GM12878 (cell line): ENCODE measurements at regions of chr1 and their contacts with region 1.

Region 1: DNA sequence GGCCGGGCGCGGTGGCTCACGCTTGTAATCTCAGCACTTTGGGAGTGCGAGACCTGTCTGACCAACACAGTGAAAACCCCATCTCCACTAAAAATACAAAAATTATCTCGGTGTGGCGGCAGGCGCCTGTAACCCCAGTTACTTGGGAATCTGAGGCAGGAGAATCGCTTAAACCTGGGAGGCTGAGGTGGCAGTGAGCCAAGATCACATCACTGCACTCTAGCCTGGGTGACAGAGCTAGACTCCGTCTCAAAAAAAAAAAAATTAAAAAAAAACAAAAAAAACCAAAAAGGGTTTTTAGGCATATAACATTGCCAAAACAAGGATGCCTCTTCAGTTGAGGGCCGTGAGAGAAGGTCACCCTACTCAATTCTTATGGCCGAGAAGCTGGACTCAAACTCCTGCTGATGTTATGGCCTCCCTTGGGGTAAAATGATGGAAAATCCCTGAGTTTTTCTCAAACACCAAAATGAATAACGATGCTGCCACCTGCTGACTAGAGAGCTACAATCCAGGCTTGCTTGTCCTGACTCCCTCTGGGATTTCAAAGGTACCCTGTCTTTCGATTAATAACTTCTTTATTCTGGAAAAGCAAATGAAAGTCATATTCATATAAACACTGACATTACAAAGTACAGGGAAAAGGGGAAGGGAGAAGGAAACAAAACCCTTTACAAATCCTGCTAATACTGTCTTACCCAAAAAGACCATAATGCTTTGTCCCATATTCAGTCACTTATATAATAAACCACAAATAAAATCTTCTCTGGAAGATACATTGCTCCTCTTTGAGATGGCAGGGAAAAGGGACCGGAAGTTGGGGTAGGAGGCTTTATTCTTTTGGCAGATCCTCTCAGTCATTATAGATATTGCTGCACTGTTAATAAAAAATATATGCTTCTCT is 10.7 kb downstream of the RAB42 start:
- DNase-seq: no peak
- ATAC-seq: peak; percentile 57
- H3K4me3 ChIP-seq: no peak overlapping the region
- H3K27ac ChIP-seq: no peak overlapping the region
- H3K4me1 ChIP-seq: peaks cover 22% of the 10 kb centered on the region
- H3K27me3 ChIP-seq: no peaks in the 10 kb centered on the region
- CTCF ChIP-seq: peak; percentile 56 to 85 (median 59); a peak in 5 of 6 replicates
- EP300 ChIP-seq: no peak
- POLR2A ChIP-seq: no peak
- RAD21 ChIP-seq: peak; percentile 84

Region 2: DNA sequence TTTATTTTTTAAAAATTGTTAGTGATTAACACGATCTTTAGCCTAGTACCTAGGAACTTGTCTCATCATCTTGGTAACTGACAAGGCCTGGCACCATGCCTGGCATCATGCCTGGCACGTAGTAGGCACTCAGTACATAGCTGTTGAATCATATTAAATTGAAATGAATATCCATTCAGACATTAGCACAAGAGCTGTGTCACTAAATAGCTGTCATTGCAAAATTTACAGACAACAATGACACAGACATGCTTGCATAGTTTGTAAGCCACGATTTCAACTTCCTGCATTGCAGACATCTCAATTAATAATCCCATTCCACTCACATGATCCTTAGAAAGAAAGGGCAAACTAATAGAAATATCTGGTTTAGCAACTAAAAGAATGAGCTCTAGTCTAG is 248.7 kb before region 1 on chr1:
- CTCF ChIA-PET with region 1: interaction called, 104 read pairs
- POLR2A ChIA-PET with region 1: no interaction called
- RAD21 ChIA-PET with region 1: interaction called, 26 read pairs
- SMC1A ChIA-PET with region 1: interaction called, 48 read pairs
- in situ Hi-C with region 1: no loop called
- intact Hi-C with region 1: loop called (anchors 2 kb)
- DNase-seq: no peak
- ATAC-seq: no peak
- H3K4me3 ChIP-seq: no peak overlapping the region
- H3K27ac ChIP-seq: no peak overlapping the region
- H3K4me1 ChIP-seq: no peaks in the 10 kb centered on the region
- H3K27me3 ChIP-seq: no peaks in the 10 kb centered on the region
- CTCF ChIP-seq: no peak
- EP300 ChIP-seq: no peak
- POLR2A ChIP-seq: no peak
- RAD21 ChIP-seq: no peak

Region 3: GRCh38 chr1:28409090-28409489 is 193.7 kb before region 1 on chr1:
- CTCF ChIA-PET with region 1: interaction called, 102 read pairs
- POLR2A ChIA-PET with region 1: interaction called, 3 read pairs
- RAD21 ChIA-PET with region 1: interaction called, 34 read pairs
- SMC1A ChIA-PET with region 1: interaction called, 66 read pairs
- in situ Hi-C with region 1: loop called (anchors 5 kb)
- intact Hi-C with region 1: loop called (anchors 2 kb)
- DNase-seq: no peak
- ATAC-seq: no peak
- H3K4me3 ChIP-seq: no peak overlapping the region
- H3K27ac ChIP-seq: no peak overlapping the region
- H3K4me1 ChIP-seq: no peaks in the 10 kb centered on the region
- H3K27me3 ChIP-seq: no peaks in the 10 kb centered on the region
- CTCF ChIP-seq: no peak
- EP300 ChIP-seq: no peak
- POLR2A ChIP-seq: no peak
- RAD21 ChIP-seq: no peak

Region 4: DNA sequence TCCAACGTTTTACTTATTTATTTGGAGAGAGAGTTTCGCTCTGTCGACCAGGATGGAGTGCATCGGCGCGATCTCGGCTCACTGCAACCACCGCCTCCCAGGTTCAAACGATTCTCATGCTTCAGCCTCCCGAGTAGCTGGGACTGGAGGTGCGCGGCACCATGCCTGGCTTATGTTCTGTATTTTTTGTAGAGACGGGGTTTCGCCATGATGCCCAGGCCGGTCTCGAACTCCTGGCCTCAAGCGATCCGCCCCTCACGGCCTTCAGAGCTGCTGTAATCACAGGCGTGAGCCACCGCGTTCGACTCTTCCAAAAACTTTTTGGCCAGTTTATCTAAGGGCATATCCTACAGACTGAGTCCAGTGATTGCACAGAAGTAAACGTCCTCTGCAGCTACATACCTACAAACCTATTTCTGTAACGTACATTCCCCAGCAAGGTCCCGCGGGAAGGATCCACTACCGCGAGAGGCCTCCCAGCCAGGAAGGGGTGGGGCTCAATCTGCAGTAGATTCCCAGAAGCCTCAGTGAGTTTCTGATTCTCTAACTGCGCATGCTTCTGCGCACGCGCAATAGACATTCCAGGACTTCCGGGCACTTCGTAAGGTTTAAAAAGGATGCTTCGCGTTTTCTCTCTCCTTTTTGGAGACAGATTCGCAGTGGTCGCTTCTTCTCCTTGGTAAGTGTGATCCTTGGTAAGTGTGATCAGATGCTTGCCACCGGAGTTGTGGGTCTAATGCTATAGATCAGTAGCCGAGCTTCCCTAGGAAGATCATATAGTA is 97.2 kb before region 1 on chr1 and contains the start of gene RCC1:
- CTCF ChIA-PET with region 1: interaction called, 58 read pairs
- POLR2A ChIA-PET with region 1: no interaction called
- RAD21 ChIA-PET with region 1: interaction called, 16 read pairs
- SMC1A ChIA-PET with region 1: interaction called, 4 read pairs
- in situ Hi-C with region 1: no loop called
- intact Hi-C with region 1: no loop called
- DNase-seq: peak; percentile 98
- ATAC-seq: peak; percentile 80
- H3K4me3 ChIP-seq: peak within 1 kb of the TSS; percentile 84
- H3K27ac ChIP-seq: peak within 1 kb of the TSS; percentile 94
- H3K4me1 ChIP-seq: peaks cover 10% of the 10 kb centered on the region
- H3K27me3 ChIP-seq: no peaks in the 10 kb centered on the region
- CTCF ChIP-seq: no peak
- EP300 ChIP-seq: no peak
- POLR2A ChIP-seq: peak; percentile 89
- RAD21 ChIP-seq: no peak
- polyA plus RNA-seq, gene RCC1: 8.3 to 15.2 TPM

Region 5: DNA sequence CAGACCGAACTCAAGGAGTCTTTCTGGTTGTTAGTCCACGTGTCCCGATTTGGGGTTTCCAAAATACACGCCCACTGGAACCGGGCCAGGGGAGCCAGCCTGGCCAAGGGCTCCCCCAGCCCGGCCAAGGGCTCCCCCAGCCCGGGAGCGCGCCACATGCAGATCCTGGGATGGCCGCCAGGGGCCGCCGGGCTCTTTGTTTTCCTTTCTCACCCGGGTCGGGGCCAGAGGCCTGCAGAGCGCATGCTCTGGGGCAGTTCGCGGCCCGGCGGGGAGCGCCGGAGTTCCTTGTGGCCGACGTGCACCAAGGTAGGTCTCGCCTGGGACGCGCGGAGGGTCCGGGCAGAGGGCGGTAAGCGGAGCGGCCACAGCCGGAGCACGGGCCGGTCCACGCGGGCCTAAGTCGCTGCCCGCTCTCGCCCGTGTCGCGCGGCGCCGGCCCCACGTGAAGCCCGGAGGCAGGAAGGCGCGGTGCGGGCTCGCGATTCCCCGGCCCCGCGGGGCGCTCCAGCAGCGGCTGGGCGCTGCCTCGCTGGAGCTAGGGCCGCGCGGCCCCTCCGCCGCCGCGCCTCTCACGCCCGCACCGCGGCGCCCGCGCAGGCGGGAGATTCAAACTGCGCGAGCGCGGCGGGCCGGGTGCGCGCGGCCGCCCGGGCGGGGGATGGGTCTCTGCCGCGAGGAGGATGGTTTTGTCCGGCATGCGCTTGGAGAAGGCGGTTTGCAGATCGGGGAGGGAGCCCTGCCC is 84.6 kb before region 1 on chr1:
- CTCF ChIA-PET with region 1: interaction called, 95 read pairs
- POLR2A ChIA-PET with region 1: interaction called, 21 read pairs
- RAD21 ChIA-PET with region 1: interaction called, 32 read pairs
- SMC1A ChIA-PET with region 1: interaction called, 57 read pairs
- in situ Hi-C with region 1: loop called (anchors 5 kb)
- intact Hi-C with region 1: loop called (anchors 1 kb)
- DNase-seq: no peak
- ATAC-seq: peak; percentile 72
- H3K4me3 ChIP-seq: peak overlapping the region; percentile 80
- H3K27ac ChIP-seq: peak overlapping the region; percentile 84
- H3K4me1 ChIP-seq: peaks cover 18% of the 10 kb centered on the region
- H3K27me3 ChIP-seq: no peaks in the 10 kb centered on the region
- CTCF ChIP-seq: peak; percentile 94 to 99 (median 97); a peak in 5 of 6 replicates
- EP300 ChIP-seq: no peak
- POLR2A ChIP-seq: peak; percentile 89
- RAD21 ChIP-seq: peak; percentile 89

Region 6: GRCh38 chr1:28581536-28582247 is 21.1 kb before region 1 on chr1:
- CTCF ChIA-PET with region 1: interaction called, 46 read pairs
- POLR2A ChIA-PET with region 1: interaction called, 33 read pairs
- RAD21 ChIA-PET with region 1: interaction called, 108 read pairs
- SMC1A ChIA-PET with region 1: interaction called, 83 read pairs
- in situ Hi-C with region 1: no loop called
- intact Hi-C with region 1: no loop called
- DNase-seq: peak; percentile 78
- ATAC-seq: peak; percentile 91
- H3K4me3 ChIP-seq: peak overlapping the region; percentile 99
- H3K27ac ChIP-seq: peak overlapping the region; percentile 55
- H3K4me1 ChIP-seq: peaks cover 14% of the 10 kb centered on the region
- H3K27me3 ChIP-seq: no peaks in the 10 kb centered on the region
- CTCF ChIP-seq: peak in 1 of 3 experiments; percentile 7; a peak in 1 of 6 replicates
- EP300 ChIP-seq: 0 out of 4 replicates have a peak, but pooled peaks of 1 of the 2 experiments have one; percentile 22
- POLR2A ChIP-seq: peak; percentile 100
- RAD21 ChIP-seq: no peak

Region 7: DNA sequence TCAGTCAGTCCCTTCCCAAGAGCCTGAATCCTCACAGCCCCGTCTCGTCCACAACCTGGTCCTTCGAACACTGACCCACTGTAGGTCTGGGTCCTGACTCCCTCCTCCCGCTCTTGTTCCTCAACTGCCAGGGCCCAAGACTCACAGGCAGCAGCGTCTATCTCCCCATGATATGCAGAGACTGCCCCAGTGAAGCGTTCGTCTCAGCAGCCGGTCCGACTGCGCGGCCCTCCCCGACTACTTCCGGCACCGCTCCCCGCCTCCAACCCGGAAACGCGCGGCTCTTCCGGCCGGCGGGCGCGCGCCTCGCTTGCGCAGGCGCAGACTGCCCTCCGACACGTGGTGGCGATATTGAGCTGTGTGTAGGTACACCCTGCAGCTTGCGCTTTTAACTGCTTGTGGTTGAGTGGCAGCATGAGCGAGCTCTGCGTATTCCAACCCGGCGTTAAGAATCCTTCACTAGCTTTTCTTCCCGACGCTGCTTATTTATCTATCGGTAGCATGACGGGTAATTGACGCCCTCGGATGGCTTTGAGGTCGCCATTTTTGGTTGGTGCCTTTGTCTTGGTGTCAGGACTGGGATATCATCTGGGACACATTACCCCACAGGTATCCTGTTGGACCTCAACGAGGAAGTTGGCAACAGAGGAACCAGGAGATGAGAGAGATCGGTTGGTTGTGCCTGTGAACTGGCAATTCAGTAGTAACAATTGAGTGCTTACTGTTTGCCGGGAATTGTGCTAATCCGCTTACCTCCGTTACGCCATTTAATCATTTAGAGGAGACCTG is 40.3 kb after region 1 on chr1 and contains the start of gene TAF12:
- CTCF ChIA-PET with region 1: interaction called, 8 read pairs
- POLR2A ChIA-PET with region 1: interaction called, 4 read pairs
- RAD21 ChIA-PET with region 1: interaction called, 10 read pairs
- SMC1A ChIA-PET with region 1: no interaction called
- in situ Hi-C with region 1: no loop called
- intact Hi-C with region 1: no loop called
- DNase-seq: peak; percentile 93
- ATAC-seq: peak; percentile 90
- H3K4me3 ChIP-seq: peak within 1 kb of the TSS; percentile 92
- H3K27ac ChIP-seq: peak within 1 kb of the TSS; percentile 90
- H3K4me1 ChIP-seq: peaks cover 13% of the 10 kb centered on the region
- H3K27me3 ChIP-seq: no peaks in the 10 kb centered on the region
- CTCF ChIP-seq: peak; percentile 32 to 73 (median 42); a peak in 4 of 6 replicates
- EP300 ChIP-seq: 0 out of 4 replicates have a peak, but pooled peaks of 1 of the 2 experiments have one; percentile 31
- POLR2A ChIP-seq: peak; percentile 99
- RAD21 ChIP-seq: peak; percentile 49
- polyA plus RNA-seq, gene TAF12: 34.3 to 41.9 TPM

Region 8: GRCh38 chr1:29055160-29055559 is 452.4 kb after region 1 on chr1:
- CTCF ChIA-PET with region 1: no interaction called
- POLR2A ChIA-PET with region 1: no interaction called
- RAD21 ChIA-PET with region 1: no interaction called
- SMC1A ChIA-PET with region 1: no interaction called
- in situ Hi-C with region 1: no loop called
- intact Hi-C with region 1: no loop called
- DNase-seq: no peak
- ATAC-seq: no peak
- H3K4me3 ChIP-seq: no peak overlapping the region
- H3K27ac ChIP-seq: no peak overlapping the region
- H3K4me1 ChIP-seq: no peaks in the 10 kb centered on the region
- H3K27me3 ChIP-seq: no peaks in the 10 kb centered on the region
- CTCF ChIP-seq: no peak
- EP300 ChIP-seq: no peak
- POLR2A ChIP-seq: no peak
- RAD21 ChIP-seq: no peak